ENCODE measurements at regions of chr6 and their contacts with region 1.

Region 1: GRCh38 chr6:506508-506907 is 115.0 kb downstream of the IRF4 start:
- DNase-seq: no peak
- H3K4me3 Mint-ChIP-seq: peak overlapping the region; percentile 64
- H3K27ac Mint-ChIP-seq: peak overlapping the region; percentile 96
- H3K4me1 Mint-ChIP-seq: peaks cover 100% of the 10 kb centered on the region
- H3K27me3 Mint-ChIP-seq: no peaks in the 10 kb centered on the region

Region 2: DNA sequence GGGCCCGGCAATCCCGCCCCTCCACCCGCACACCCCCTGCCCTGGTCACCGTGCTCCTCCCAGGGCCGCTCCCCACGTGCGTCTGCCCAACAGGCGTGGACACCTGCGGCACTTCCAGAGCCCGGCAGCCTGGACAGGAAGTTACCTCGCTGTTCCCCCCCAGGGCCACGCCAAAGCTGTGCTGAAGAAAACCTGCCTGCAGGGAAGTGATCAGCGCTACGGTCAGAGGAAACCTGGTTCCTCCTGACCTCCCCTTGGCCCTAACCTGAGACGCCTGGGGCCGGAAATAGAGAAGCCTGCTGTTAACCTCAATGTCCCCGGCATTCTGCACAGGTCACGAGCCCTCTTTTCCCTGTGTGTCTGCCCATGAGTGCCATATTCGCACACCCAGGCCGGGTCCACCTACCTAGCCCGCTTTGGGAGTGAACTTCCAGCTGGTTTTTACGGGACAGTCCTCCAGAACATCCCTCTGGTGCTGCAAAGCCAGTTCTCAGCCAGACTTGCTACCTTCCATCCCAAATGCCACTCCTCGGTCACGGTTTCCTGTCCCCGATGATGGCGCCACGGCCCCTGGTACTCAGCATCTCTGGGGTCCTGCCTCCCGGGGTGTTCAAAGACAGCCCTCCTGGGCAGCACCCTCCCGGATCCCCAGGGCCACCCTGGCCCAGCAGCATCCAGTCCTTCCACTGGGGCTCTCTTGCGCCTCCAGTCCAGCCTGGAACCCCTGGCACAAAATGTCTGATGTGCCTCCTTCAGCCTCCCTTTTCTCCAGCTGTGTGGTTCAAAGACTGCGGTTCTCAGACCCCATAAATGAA is 126.9 kb before region 1 on chr6:
- intact Hi-C with region 1: no loop called
- DNase-seq: no peak
- H3K4me3 Mint-ChIP-seq: no peak overlapping the region
- H3K27ac Mint-ChIP-seq: no peak overlapping the region
- H3K4me1 Mint-ChIP-seq: peaks cover 13% of the 10 kb centered on the region
- H3K27me3 Mint-ChIP-seq: peaks cover 7% of the 10 kb centered on the region

Region 3: DNA sequence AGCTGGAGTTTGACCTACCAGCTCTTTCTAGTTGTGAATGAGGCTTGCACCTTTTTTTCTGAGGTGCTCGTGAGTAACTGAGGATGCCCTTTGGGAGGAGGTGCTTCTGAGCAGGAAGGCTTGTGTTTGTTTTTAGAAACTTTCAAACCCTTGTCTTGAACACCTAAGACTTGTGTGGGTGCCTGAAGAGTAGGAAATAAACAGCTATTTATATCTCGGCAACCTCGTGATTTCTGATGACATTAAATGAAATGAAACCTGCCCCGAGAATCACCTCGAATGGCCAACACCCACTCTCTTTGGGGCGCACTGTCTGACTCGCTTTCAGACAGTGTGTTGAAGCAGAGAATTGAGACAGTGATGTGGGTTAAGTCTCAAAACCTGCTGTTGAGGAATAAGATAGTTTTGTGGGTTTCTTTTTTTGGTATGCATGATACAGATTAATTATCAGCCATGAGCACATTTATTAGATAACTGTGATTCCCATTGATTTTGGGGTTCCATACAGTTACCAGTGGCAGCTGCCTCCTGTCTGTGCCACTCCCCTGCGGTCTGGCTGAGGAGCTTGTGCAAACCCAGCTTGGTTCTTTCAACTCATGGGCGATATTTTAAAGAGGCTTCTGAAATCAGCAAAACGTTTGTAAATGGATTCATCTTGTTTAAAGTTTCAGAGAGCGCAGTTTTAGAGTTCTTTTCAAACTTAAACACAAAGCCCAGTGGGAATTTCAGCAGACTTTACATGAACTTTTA is 106.5 kb before region 1 on chr6:
- intact Hi-C with region 1: loop called (anchors 1 kb)
- DNase-seq: peak; percentile 40
- H3K4me3 Mint-ChIP-seq: peak overlapping the region; percentile 79
- H3K27ac Mint-ChIP-seq: peak overlapping the region; percentile 56
- H3K4me1 Mint-ChIP-seq: peaks cover 93% of the 10 kb centered on the region
- H3K27me3 Mint-ChIP-seq: no peaks in the 10 kb centered on the region

Region 4: DNA sequence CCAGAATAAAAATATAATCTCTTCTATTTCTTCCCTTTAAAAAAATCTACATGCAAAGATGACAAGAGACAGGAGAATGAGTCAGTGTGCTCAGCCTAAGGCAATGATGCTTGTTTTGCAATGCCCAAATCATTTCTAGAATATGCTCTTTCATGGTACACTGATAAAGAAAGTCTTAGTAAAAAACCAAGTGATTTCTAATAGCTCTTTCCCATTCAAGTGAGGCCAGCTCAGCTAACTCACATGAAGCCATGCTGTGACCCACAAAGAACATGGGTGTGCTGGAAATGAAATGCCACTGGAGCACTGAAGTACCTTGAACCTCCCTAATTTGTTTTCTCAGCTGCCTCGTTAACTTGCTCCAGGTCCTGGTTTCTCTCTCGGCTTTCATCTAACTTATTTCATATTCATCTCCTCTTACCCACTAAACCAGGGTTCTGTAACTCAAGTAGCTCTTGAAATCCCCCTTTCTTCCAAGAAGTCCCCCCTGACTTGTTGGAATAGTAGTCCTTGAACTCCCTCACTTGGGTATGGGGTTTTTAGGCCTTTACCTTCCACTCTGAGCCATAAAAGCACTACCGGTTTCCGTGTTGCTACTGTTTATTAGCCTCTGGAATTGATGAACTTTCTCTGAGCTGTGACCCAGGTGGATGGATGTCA is 22.3 kb before region 1 on chr6:
- intact Hi-C with region 1: loop called (anchors 1 kb)
- DNase-seq: no peak
- H3K4me3 Mint-ChIP-seq: peak overlapping the region; percentile 38
- H3K27ac Mint-ChIP-seq: peak overlapping the region; percentile 85
- H3K4me1 Mint-ChIP-seq: peaks cover 65% of the 10 kb centered on the region
- H3K27me3 Mint-ChIP-seq: no peaks in the 10 kb centered on the region

Region 5: GRCh38 chr6:548517-548916 is 42.0 kb after region 1 on chr6:
- intact Hi-C with region 1: loop called (anchors 1 kb)
- DNase-seq: peak; percentile 43
- H3K4me3 Mint-ChIP-seq: peak overlapping the region; percentile 72
- H3K27ac Mint-ChIP-seq: peak overlapping the region; percentile 95
- H3K4me1 Mint-ChIP-seq: peaks cover 75% of the 10 kb centered on the region
- H3K27me3 Mint-ChIP-seq: no peaks in the 10 kb centered on the region

Region 6: DNA sequence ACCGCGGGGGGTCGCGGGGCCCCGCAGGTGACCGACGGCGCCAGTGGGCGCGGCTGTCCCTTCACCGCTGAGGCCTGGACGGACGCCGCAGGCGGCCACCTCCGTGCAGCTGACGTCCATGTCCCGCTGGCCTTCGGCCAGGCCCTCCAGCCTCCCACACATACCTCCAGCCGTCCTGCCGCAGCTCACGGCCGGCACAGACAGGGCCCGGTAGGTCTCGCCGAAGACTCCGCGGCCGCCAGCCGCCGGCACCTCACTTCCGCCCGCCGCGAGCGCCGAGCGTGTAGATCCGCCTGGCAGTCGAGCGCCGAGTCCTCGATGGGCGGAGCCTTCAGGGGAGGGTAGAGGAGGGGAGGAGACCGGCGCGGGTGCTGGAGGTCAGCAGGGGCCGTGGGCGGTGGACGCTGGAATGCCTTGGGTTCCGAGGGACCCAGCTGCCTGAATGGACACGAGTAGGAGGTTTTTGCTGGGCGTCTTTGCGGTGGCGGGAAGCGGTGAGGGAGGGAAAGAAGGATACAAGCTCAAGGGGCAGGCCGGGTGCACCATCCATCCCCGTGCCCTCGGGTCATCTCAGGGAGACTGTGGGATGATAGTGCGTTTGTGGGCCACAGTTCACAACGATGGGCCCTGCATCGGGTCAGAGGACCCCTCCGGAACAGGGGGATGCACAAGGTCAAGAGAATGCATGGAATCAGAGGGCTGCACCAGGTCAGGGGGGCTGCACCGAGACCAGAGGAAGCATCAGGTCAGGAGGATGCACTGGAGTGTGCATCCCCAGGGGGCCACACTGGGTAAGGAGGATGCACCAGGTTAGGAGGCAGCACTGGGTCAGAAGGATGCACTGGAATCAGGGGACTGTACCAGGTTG is 186.6 kb after region 1 on chr6 and contains the start of gene EXOC2:
- intact Hi-C with region 1: loop called (anchors 5 kb)
- DNase-seq: peak; percentile 86
- H3K4me3 Mint-ChIP-seq: peak within 1 kb of the TSS; percentile 95
- H3K27ac Mint-ChIP-seq: peak within 1 kb of the TSS; percentile 93
- H3K4me1 Mint-ChIP-seq: peaks cover 31% of the 10 kb centered on the region
- H3K27me3 Mint-ChIP-seq: no peaks in the 10 kb centered on the region
- total RNA-seq, gene EXOC2: 44.5 and 47.1 TPM in 2 replicates

Region 7: GRCh38 chr6:1255636-1256365 is 749.3 kb after region 1 on chr6:
- intact Hi-C with region 1: no loop called
- DNase-seq: no peak
- H3K4me3 Mint-ChIP-seq: no peak overlapping the region
- H3K27ac Mint-ChIP-seq: no peak overlapping the region
- H3K4me1 Mint-ChIP-seq: no peaks in the 10 kb centered on the region
- H3K27me3 Mint-ChIP-seq: peaks cover 5% of the 10 kb centered on the region

Measured in activated T-helper 1 cell treated with anti-CD3 and anti-CD28 coated beads, Interleukin-12 subunit alpha, Interleukin-12 subunit beta, Interleukin-2, Interleukin-4 antibody, amounts not matched to agents 30 ng/mL and 10 ng/mL and 1 ng/mL, durations not matched to agents 14 hours and 24 hours and 36 hours (primary cell).